ENCODE measurements at regions of chr4 and their contacts with region 1.

Region 1: GRCh38 chr4:13654158-13654797 is 26.8 kb upstream of the BOD1L1 start:
- DNase-seq: peak; percentile 88
- H3K4me3 Mint-ChIP-seq: peak overlapping the region; percentile 75
- H3K27ac Mint-ChIP-seq: no peak overlapping the region
- H3K4me1 Mint-ChIP-seq: peaks cover 15% of the 10 kb centered on the region
- H3K27me3 Mint-ChIP-seq: peaks cover 2% of the 10 kb centered on the region

Region 2: DNA sequence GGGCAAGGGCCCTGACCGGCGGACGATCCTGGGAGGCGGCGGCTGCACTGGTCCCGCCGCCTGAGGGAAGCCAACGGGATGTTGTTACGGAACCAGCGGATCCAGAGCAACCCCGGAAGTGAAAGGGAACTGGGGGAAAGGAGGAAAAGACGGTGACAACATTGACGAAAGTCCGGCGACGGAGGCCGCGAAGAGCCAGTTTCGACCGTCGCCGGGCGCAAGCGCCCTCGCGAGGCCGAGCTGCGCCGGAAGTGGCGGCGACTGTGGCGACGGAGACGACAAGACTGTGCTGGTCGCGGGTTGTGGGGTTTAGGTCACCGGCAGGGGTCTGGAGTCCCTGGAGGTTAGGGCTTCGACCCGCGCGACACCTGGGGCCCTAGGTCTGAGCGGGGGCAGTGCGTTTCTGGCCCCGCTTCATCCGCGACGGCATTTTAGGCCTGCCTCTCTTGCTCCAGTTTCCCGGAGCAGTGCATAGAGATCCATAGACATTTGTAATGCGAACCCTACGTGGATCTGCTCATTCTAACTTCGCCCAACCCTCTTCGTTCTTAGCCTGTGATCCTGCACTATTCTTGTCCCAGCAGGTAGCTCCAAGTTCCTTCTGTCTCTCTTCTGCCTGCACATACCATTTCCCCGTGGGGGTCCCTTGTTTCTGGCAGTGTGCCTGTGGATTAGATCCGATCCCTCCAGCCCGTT is 26.5 kb before region 1 on chr4 and contains the start of gene BOD1L1:
- CTCF ChIA-PET with region 1: interaction called, 42 read pairs
- POLR2A ChIA-PET with region 1: no interaction called
- intact Hi-C with region 1: loop called (anchors 1 kb)
- DNase-seq: peak; percentile 89
- H3K4me3 Mint-ChIP-seq: peak within 1 kb of the TSS; percentile 97
- H3K27ac Mint-ChIP-seq: peak within 1 kb of the TSS; percentile 94
- H3K4me1 Mint-ChIP-seq: peaks cover 41% of the 10 kb centered on the region
- H3K27me3 Mint-ChIP-seq: no peaks in the 10 kb centered on the region
- total RNA-seq, gene BOD1L1: 25.5 to 31.2 TPM

Region 3: GRCh38 chr4:13670456-13671160 is 16.3 kb after region 1 on chr4:
- CTCF ChIA-PET with region 1: interaction called, 10 read pairs
- POLR2A ChIA-PET with region 1: no interaction called
- intact Hi-C with region 1: no loop called
- DNase-seq: no peak
- H3K4me3 Mint-ChIP-seq: no peak overlapping the region
- H3K27ac Mint-ChIP-seq: no peak overlapping the region
- H3K4me1 Mint-ChIP-seq: no peaks in the 10 kb centered on the region
- H3K27me3 Mint-ChIP-seq: peaks cover 11% of the 10 kb centered on the region

Region 4: GRCh38 chr4:13815231-13815630 is 161.0 kb after region 1 on chr4:
- CTCF ChIA-PET with region 1: no interaction called
- POLR2A ChIA-PET with region 1: no interaction called
- intact Hi-C with region 1: no loop called
- DNase-seq: no peak
- H3K4me3 Mint-ChIP-seq: no peak overlapping the region
- H3K27ac Mint-ChIP-seq: no peak overlapping the region
- H3K4me1 Mint-ChIP-seq: no peaks in the 10 kb centered on the region
- H3K27me3 Mint-ChIP-seq: no peaks in the 10 kb centered on the region

Region 5: DNA sequence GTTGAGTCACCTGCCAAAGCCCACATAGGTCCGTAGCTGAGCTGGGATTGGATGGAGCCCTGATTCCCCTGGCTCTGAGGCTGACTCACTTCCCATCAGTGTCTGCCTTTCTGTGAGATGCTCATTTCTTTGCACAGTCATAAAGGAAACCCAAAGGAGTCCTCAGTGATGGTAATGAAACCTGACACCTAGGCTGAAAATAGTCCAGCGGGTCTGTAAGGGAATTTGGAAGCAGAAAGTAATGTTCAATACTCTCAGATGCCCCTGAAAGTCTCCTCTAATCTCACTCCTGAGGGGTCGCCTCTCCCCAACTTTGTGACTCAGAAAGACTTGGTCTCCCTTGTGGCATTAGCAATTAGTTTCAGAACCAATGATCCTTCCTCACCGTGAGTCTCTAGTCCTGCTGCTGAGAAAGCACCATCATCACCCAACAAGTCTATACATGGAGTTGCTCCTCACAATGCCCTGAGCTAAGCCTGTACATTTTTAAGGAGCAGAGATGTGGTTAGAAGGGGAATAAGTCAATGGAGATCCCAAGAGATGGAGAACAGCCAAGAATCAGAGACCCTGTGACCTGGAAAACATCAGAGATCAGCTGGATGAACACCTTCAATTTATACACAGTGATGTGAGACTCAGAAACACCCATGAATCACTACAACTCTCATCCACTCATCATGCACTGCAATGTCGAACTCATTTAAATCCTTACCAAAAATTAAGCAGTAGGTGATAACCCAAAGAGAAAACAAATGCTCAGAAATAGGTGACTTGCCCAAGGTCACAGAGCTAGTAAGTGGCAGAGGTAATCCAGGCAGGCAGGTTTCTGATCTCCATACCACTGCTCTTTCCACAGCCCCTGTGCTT is 1129.0 kb after region 1 on chr4:
- CTCF ChIA-PET with region 1: interaction called, 4 read pairs
- POLR2A ChIA-PET with region 1: no interaction called
- intact Hi-C with region 1: loop called (anchors 1 kb)
- DNase-seq: peak; percentile 82
- H3K4me3 Mint-ChIP-seq: no peak overlapping the region
- H3K27ac Mint-ChIP-seq: peak overlapping the region; percentile 77
- H3K4me1 Mint-ChIP-seq: peaks cover 22% of the 10 kb centered on the region
- H3K27me3 Mint-ChIP-seq: peaks cover 7% of the 10 kb centered on the region

Region 6: GRCh38 chr4:14920759-14921320 is 1266.6 kb after region 1 on chr4:
- CTCF ChIA-PET with region 1: no interaction called
- POLR2A ChIA-PET with region 1: no interaction called
- intact Hi-C with region 1: loop called (anchors 10 kb)
- DNase-seq: peak; percentile 44
- H3K4me3 Mint-ChIP-seq: no peak overlapping the region
- H3K27ac Mint-ChIP-seq: no peak overlapping the region
- H3K4me1 Mint-ChIP-seq: no peaks in the 10 kb centered on the region
- H3K27me3 Mint-ChIP-seq: peaks cover 6% of the 10 kb centered on the region

Region 7: DNA sequence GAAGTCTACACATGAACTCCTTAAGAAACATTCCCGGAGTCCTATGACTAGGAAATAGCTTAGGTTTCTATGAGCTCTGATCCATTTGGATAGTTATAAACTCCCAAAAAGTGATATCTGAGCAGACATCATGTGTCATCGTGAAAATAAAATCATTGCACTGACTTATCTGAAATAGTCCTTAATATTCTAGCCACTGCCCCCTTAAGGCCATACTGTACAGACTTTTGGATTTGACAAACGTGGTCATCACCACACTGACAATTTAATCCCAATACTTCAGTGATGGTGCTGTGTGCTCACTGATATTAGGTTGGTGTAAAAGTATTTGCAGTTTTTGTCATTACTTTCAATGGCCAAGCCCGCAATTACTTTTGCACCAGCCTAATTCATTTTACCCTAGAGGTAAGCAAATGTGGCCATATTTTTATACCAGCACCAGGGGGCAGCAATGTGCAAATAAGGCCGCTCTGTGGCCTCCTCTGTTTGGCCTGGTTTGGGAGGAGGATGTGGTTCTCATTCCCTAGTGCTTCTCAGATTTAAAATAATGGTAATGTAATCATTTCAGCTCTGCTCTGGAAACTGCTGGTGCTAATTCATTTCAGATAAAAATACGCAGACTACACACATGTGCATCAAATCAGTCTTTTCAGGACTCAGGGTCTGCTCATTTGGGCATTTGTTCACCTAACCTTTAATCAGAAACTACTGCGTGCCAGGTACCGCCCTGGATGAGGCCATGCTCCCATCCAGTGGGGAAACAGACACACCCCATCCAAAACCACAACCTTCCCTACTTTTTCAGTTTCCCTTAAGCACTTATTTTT is 1577.2 kb after region 1 on chr4:
- CTCF ChIA-PET with region 1: no interaction called
- POLR2A ChIA-PET with region 1: no interaction called
- intact Hi-C with region 1: loop called (anchors 10 kb)
- DNase-seq: peak; percentile 81
- H3K4me3 Mint-ChIP-seq: no peak overlapping the region
- H3K27ac Mint-ChIP-seq: no peak overlapping the region
- H3K4me1 Mint-ChIP-seq: peaks cover 28% of the 10 kb centered on the region
- H3K27me3 Mint-ChIP-seq: no peaks in the 10 kb centered on the region